ENCODE measurements at regions of chr12 and their contacts with region 1.

Region 1: DNA sequence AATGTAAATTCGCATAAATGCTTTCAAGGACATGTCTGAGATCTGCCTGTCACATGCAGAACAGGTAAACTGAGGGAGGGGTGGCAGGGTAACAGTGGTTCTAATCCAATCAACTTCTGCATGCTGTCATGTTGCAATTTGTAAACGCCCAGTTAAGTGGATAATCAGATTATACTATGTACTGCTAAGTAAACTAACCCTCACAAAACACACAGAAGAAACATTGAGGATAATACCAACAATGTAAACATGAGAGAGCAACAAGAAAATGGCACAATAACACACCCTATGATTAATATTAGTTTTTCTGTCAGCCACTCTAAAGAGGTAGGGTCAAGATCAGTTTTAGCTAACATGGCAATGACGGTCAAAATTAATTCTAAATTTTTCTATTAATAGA is 123.7 kb downstream of the KIF21A start:
- DNase-seq: no peak
- H3K4me3 Mint-ChIP-seq: no peak overlapping the region
- H3K27ac Mint-ChIP-seq: no peak overlapping the region
- H3K4me1 Mint-ChIP-seq: no peaks in the 10 kb centered on the region
- H3K27me3 Mint-ChIP-seq: no peaks in the 10 kb centered on the region
- CTCF ChIP-seq: no peak

Region 2: GRCh38 chr12:39343665-39344064 is 24.5 kb after region 1 on chr12:
- CTCF ChIA-PET with region 1: interaction called, 10 read pairs
- POLR2A ChIA-PET with region 1: no interaction called
- intact Hi-C with region 1: no loop called
- DNase-seq: no peak
- H3K4me3 Mint-ChIP-seq: no peak overlapping the region
- H3K27ac Mint-ChIP-seq: no peak overlapping the region
- H3K4me1 Mint-ChIP-seq: no peaks in the 10 kb centered on the region
- H3K27me3 Mint-ChIP-seq: no peaks in the 10 kb centered on the region
- CTCF ChIP-seq: no peak

Region 3: DNA sequence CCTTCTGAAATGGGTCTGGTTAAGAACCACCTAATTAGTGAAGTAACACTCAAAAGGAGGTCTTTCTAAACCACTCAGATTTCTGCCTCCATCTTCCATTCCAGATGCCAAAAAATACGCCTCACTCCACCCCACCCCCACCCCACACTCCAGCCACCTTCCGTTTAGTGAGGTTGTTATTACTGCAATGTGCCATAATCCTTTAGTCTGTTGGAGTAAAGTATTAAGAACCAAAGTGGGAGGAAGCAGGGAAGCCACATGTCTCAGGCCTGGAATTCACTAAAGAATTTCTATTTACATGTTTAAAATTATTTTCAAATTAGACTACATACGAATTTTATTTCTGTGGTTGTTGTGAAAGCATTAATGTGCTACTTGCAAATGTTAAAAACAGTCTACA is 116.3 kb after region 1 on chr12:
- CTCF ChIA-PET with region 1: no interaction called
- POLR2A ChIA-PET with region 1: no interaction called
- intact Hi-C with region 1: no loop called
- DNase-seq: no peak
- H3K4me3 Mint-ChIP-seq: no peak overlapping the region
- H3K27ac Mint-ChIP-seq: no peak overlapping the region
- H3K4me1 Mint-ChIP-seq: peaks cover 6% of the 10 kb centered on the region
- H3K27me3 Mint-ChIP-seq: no peaks in the 10 kb centered on the region
- CTCF ChIP-seq: no peak

Region 4: DNA sequence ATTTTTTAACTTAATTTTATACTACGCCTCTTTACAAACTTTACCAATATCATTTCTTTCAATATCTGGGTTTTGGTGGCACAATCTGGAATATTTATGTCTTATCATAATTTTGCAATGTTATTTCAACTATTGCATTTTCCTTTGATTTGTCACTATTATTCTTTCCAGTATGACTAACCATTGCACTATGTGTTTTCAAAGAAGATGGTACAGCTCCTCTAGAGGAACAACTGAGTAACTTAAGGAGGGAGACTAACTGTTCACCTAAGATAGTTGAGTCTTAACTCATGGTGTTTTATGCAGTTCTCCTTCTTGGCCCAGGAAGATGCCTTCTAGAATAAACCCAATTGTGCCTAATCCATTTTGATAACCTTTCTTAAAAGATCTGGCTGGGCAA is 184.3 kb after region 1 on chr12:
- CTCF ChIA-PET with region 1: interaction called, 3 read pairs
- POLR2A ChIA-PET with region 1: no interaction called
- intact Hi-C with region 1: loop called (anchors 1 kb)
- DNase-seq: peak; percentile 61
- H3K4me3 Mint-ChIP-seq: no peak overlapping the region
- H3K27ac Mint-ChIP-seq: no peak overlapping the region
- H3K4me1 Mint-ChIP-seq: peaks cover 18% of the 10 kb centered on the region
- H3K27me3 Mint-ChIP-seq: no peaks in the 10 kb centered on the region
- CTCF ChIP-seq: peak; percentile 51

Region 5: GRCh38 chr12:39692258-39692853 is 373.2 kb after region 1 on chr12:
- CTCF ChIA-PET with region 1: interaction called, 10 read pairs
- POLR2A ChIA-PET with region 1: no interaction called
- intact Hi-C with region 1: loop called (anchors 1 kb)
- DNase-seq: peak; percentile 3
- H3K4me3 Mint-ChIP-seq: no peak overlapping the region
- H3K27ac Mint-ChIP-seq: no peak overlapping the region
- H3K4me1 Mint-ChIP-seq: no peaks in the 10 kb centered on the region
- H3K27me3 Mint-ChIP-seq: no peaks in the 10 kb centered on the region
- CTCF ChIP-seq: no peak

Measured in MCF 10A (cell line).